Common myeloid progenitor, CD34-positive (primary cell): ENCODE measurements at regions of chr4 and their contacts with region 1.

Region 1: DNA sequence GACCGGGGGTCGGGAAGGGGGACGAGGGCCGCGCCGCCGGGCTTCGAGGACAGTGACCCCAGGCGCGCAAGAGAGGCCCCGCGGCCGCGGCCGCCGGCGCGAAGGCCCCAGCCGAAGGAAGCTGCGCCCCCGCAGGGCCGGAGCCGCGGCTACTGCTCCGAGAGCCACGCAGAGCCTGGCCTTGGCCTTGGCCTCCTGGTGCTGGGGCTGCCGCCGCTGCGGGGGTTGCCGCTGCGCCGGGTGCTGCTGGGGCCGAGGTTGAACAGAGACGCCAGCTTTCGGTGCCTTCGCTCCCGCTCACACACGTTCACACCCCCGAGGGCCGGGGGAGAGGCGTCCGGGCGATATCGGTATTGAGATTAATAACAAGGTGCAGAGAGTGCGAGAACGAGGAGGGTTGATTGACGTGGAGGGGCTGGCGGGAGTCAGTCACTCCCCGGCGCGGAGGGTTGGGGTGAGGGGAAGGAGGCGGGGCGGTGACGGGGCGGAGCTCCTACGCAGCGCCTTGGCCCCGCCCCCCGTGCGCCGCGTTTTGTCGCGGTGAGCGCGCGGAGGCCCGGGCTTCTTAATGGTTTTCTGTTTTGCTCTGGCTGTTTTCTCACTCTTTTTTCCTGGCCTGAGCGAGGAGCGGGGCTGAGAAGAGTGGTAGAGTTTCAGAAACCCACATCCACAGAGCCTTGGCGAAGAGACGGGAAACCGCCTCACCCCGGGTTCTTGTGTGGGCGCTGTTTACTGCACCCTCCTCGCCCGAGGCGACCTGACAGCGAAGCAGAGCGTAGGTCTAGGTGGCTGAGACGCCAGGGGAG is 878 bp upstream of the CNOT6L start:
- DNase-seq: peak; percentile 87 to 94 (median 94)
- H3K4me3 ChIP-seq: peak overlapping the region; percentile 90 to 99 (median 93)
- H3K27ac ChIP-seq: peak overlapping the region; percentile 95 to 97
- H3K4me1 ChIP-seq: peaks cover 21 to 53% (median 34%) of the 10 kb centered on the region in 4 experiments
- H3K27me3 ChIP-seq: no peaks in the 10 kb centered on the region

Region 2: DNA sequence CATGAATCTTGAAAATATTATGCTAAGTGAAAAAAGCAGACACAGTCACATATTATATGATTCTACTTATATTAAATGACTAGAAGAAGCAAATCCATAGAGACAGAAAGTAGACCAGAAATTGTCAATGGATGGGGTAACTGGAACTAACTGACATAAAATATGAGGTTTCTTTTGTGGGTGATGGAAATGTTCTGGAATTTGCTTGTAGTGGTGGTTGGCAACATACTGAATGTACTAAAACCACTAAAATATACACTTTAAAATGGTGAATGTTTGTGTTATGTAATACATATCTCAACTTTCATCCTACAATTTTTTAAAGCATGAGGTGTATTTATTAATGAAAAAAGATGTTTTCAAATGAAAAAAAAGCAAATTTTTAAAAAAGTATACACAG is 15.6 kb before region 1 on chr4:
- CTCF ChIA-PET with region 1: interaction called, 10 read pairs
- POLR2A ChIA-PET with region 1: interaction called, 3 read pairs
- DNase-seq: no peak
- H3K4me3 ChIP-seq: no peak overlapping the region
- H3K27ac ChIP-seq: no peak overlapping the region
- H3K4me1 ChIP-seq: peaks cover 8 to 30% (median 16%) of the 10 kb centered on the region in 4 experiments
- H3K27me3 ChIP-seq: no peaks in the 10 kb centered on the region

Region 3: GRCh38 chr4:77852892-77853495 is 32.9 kb after region 1 on chr4:
- CTCF ChIA-PET with region 1: interaction called, 28 read pairs
- POLR2A ChIA-PET with region 1: interaction called, 14 read pairs
- DNase-seq: peak; percentile 85 to 97 (median 96)
- H3K4me3 ChIP-seq: peak overlapping the region in 2 of 7 experiments; percentile 43 to 52
- H3K27ac ChIP-seq: peak overlapping the region in 1 of 2 experiments; percentile 61
- H3K4me1 ChIP-seq: peaks cover 32 to 43% (median 36%) of the 10 kb centered on the region in 4 experiments
- H3K27me3 ChIP-seq: no peaks in the 10 kb centered on the region

Region 4: DNA sequence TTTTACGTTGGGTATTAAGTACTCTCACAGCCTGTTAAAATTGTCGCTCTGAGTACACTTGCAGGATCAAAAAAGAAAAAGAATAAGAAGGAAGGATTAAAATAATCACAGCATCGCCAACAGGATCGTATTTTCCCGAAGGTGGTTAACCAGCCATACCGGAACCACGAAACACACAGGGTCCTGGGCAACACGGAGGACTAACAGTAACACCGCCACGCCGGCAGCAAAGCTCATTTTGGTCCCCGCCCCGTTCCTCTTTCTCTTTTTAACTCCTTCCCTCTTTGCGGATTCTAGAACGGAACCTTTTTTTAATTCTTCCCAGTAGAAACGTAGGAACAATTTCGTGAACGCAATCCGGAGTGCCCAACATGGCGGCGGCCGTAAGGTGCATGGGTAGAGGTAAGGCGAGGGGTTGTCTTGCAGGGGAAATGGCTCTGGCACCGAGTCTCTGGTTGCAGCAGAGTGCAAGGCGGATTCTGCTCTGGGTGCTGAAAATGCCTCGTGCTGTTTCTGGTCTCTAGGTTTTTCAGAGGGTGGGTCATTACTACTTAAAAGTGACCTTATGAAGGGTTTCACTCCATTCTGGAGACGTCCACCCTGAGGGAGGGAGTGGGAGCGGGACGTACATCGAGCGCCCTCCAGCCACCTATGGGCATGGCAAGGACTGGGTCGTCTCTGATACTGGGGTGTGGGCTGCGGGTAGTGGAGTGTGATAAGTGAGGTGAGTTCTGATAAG is 42.6 kb after region 1 on chr4 and contains the start of gene MRPL1:
- CTCF ChIA-PET with region 1: interaction called, 28 read pairs
- POLR2A ChIA-PET with region 1: interaction called, 27 read pairs
- DNase-seq: peak; percentile 97
- H3K4me3 ChIP-seq: peak within 1 kb of the TSS; percentile 84 to 100 (median 87)
- H3K27ac ChIP-seq: peak within 1 kb of the TSS; percentile 98 to 99
- H3K4me1 ChIP-seq: peaks cover 7 to 31% (median 21%) of the 10 kb centered on the region in 4 experiments
- H3K27me3 ChIP-seq: no peaks in the 10 kb centered on the region

Region 5: GRCh38 chr4:77921701-77922100 is 101.7 kb after region 1 on chr4:
- CTCF ChIA-PET with region 1: no interaction called
- POLR2A ChIA-PET with region 1: no interaction called
- DNase-seq: peak in 2 of 3 donors; percentile 16 to 43
- H3K4me3 ChIP-seq: no peak overlapping the region
- H3K27ac ChIP-seq: peak overlapping the region in 1 of 2 experiments; percentile 44
- H3K4me1 ChIP-seq: peaks cover 0 to 28% (median 12%) of the 10 kb centered on the region in 4 experiments
- H3K27me3 ChIP-seq: no peaks in the 10 kb centered on the region